ENCODE measurements at regions of chr11 and their contacts with region 1.

Region 1: GRCh38 chr11:64969209-64969608 is 2.7 kb downstream of the MAJIN start:
- DNase-seq: peak; percentile 39
- H3K4me3 ChIP-seq: no peak overlapping the region
- H3K27ac ChIP-seq: no peak overlapping the region
- H3K4me1 ChIP-seq: no peaks in the 10 kb centered on the region
- H3K27me3 ChIP-seq: no peaks in the 10 kb centered on the region
- CTCF ChIP-seq: no peak

Region 2: DNA sequence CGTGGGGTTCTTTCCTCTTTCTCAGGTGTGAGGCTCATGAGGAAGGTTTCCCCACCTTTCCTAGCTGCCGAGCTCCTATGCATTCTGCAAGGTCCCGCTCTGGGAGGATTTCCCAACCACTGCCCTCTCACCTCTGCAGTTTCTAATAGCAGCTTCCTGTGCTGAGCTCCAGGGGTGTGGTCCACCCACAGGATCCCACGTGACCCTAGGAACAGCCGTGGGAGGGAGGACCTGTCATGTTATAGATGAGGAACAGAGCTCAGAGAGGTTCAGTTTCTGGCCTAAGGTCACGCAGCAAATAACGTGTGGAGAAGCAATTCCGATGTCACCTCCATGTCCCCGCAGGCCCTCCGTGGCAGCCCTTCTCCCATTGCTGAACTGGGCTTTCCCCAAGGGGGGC is 895.0 kb before region 1 on chr11:
- CTCF ChIA-PET with region 1: no interaction called
- POLR2A ChIA-PET with region 1: no interaction called
- intact Hi-C with region 1: no loop called
- DNase-seq: no peak
- H3K4me3 ChIP-seq: no peak overlapping the region
- H3K27ac ChIP-seq: no peak overlapping the region
- H3K4me1 ChIP-seq: peaks cover 61% of the 10 kb centered on the region
- H3K27me3 ChIP-seq: no peaks in the 10 kb centered on the region
- CTCF ChIP-seq: no peak

Region 3: DNA sequence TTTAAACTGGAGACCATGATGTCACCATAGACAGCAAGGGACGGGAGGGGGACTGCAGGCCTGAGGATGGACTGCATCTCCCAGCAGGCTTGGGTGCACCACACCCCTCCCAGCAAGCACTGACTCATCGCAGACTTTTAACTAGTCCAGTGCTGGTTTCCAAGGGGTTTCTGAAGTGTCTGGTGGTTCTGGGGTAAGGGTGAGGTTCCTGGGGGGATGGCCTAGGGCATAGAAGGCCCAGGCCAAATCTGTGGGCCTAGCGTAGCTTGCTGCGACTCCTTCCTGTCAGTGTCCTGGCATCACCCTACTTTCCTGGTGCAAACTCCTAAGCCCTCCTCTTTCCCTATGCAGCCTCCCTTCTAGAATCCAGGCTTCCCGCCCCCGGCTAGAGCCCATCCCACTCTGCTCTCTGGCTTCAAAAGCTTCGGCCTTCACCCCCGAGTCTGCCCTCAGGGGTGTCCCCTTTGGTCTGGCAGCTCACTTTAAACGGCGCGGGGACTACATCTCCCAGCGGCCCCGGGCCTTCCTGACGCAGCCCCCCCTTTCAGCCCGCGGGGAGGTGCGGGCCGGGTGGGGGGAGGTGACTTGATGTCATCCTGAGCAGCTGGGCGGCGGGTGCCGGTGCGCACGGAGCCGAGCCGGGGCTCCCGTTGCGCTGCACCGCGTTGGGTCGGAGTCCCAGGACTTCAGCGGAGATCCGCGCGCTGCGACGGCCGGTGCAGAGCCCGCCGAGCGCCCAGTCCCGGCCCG is 44.9 kb before region 1 on chr11 and contains the start of gene PPP2R5B:
- CTCF ChIA-PET with region 1: interaction called, 10 read pairs
- POLR2A ChIA-PET with region 1: no interaction called
- intact Hi-C with region 1: no loop called
- DNase-seq: peak; percentile 96
- H3K4me3 ChIP-seq: peak within 1 kb of the TSS; percentile 69
- H3K27ac ChIP-seq: peak within 1 kb of the TSS; percentile 77
- H3K4me1 ChIP-seq: peaks cover 8% of the 10 kb centered on the region
- H3K27me3 ChIP-seq: no peaks in the 10 kb centered on the region
- CTCF ChIP-seq: no peak
- total RNA-seq, gene PPP2R5B: 16.1 and 17.2 TPM in 2 replicates

Region 4: DNA sequence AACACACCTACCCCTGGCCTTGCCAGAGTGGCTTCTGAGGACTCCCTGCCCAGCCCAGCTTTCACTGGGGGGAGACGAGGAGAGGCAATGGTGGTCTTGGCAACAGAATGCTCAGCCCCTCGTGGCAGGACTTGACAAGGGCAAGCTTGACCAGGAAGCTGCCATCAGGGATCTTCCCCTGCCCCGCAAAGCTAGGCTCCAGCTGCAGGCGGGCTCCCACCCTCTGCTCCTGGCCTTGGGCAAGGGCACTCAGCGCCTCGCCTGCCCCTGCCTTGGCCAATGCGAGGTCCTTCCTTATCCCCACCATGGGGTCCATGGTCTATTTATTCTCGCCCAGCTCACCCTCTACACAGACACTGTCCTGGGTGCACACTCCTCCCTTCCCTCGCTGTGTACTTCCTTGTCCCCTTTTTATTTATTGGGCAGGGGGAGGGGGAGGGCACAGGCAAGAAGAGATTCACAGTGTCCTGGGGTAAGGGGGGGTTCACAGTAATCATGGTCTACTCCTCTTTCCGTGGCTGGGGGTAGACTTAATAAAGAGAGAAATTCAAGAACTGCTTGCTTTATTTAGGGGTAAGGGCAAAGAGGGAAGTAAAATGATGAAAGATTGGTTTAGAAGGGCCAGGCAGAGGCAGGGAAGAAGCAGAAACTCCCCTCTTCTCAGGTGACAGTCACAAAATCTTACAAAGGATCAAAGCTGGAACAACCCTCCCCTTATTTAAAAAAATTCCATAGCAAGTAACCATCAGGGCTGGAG is 35.1 kb before region 1 on chr11:
- CTCF ChIA-PET with region 1: no interaction called
- POLR2A ChIA-PET with region 1: interaction called, 10 read pairs
- intact Hi-C with region 1: no loop called
- DNase-seq: no peak
- H3K4me3 ChIP-seq: no peak overlapping the region
- H3K27ac ChIP-seq: no peak overlapping the region
- H3K4me1 ChIP-seq: peaks cover 9% of the 10 kb centered on the region
- H3K27me3 ChIP-seq: no peaks in the 10 kb centered on the region
- CTCF ChIP-seq: no peak

Region 5: DNA sequence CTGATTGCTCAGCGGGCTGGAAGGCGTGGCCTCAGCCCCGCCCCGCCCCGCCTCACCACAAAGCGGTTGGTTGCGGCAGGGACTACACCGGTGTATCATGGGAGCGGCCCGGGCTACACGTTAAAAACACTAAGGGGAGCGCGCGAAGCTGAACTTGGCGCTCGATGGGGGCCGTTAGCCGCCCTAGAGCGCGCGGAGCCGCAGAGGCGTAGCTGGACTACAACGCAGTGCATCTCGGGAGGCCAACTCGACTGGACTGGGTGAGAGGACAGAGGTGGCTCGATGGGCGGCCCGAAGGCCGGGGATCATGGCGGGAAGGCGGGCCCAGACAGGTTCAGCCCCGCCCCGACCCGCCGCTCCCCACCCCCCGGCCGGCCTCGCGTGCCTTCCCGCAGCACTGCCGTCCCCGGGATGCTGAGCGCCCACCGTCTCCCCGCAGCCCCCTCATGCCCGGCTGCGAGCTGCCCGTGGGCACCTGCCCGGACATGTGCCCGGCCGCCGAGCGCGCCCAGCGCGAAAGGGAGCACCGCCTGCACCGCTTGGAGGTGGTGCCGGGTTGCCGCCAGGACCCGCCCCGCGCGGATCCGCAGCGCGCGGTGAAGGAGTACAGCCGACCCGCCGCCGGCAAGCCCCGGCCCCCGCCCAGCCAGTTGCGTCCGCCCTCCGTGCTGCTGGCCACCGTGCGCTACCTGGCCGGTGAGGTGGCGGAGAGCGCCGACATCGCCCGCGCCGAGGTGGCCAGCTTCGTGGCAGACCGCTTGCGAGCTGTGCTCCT is 71.8 kb after region 1 on chr11 and contains the start of gene SAC3D1:
- CTCF ChIA-PET with region 1: no interaction called
- POLR2A ChIA-PET with region 1: no interaction called
- intact Hi-C with region 1: no loop called
- DNase-seq: peak; percentile 99
- H3K4me3 ChIP-seq: peak within 1 kb of the TSS; percentile 91
- H3K27ac ChIP-seq: peak within 1 kb of the TSS; percentile 94
- H3K4me1 ChIP-seq: peaks cover 7% of the 10 kb centered on the region
- H3K27me3 ChIP-seq: no peaks in the 10 kb centered on the region
- CTCF ChIP-seq: no peak
- total RNA-seq, gene SAC3D1: 41.9 and 43.9 TPM in 2 replicates

Region 6: GRCh38 chr11:65506770-65507505 is 537.7 kb after region 1 on chr11:
- CTCF ChIA-PET with region 1: no interaction called
- POLR2A ChIA-PET with region 1: no interaction called
- intact Hi-C with region 1: no loop called
- DNase-seq: peak; percentile 70
- H3K4me3 ChIP-seq: peak overlapping the region; percentile 85
- H3K27ac ChIP-seq: peak overlapping the region; percentile 72
- H3K4me1 ChIP-seq: peaks cover 33% of the 10 kb centered on the region
- H3K27me3 ChIP-seq: no peaks in the 10 kb centered on the region
- CTCF ChIP-seq: no peak

Measured in A673 (cell line).